ENCODE measurements at regions of chr12 and their contacts with region 1.

Region 1: GRCh38 chr12:44015335-44015941 is 179.6 kb downstream of the TMEM117 start:
- DNase-seq: no peak
- ATAC-seq: peak; percentile 78

Region 2: GRCh38 chr12:44338736-44339135 is 323.3 kb after region 1 on chr12:
- intact Hi-C with region 1: no loop called
- DNase-seq: no peak
- ATAC-seq: no peak

Region 3: DNA sequence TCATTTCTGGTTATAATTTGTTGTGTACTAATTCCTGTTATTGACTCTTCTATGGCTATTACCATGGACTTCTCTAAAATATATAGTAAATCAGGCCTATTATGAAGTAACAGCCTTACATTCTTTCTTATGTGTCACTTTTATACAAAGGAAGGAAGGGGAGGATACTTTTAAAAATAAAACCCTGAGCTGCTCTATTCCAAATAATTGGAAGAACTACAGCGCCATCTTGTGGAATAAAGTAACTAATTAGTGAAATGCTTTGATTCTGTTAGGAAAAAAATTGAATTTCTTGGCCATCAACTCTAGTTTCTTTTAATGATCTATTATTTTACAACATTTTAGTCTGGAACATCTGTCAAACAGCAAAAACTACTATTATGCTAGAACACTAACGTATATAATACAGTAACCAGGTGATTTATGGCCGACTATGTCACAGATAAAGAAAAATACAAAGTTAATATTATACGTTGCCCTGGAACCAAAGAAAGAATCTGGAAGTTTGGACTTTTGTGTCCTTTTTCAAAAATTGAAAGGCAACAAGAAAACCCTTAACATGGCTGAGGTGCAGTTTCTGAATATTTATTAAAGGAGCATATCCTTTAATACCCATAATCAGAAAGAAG is 915.6 kb after region 1 on chr12:
- intact Hi-C with region 1: loop called (anchors 5 kb)
- DNase-seq: no peak
- ATAC-seq: peak; percentile 58

Measured in Right ventricle myocardium superior (tissue), 1 donor.